ENCODE measurements at regions of chr14 and their contacts with region 1.

Region 1: GRCh38 chr14:20350860-20351259 is 7.4 kb downstream of the PARP2 start:
- DNase-seq: peak in 1 of 2 experiments; percentile 6
- H3K4me3 ChIP-seq: no peak overlapping the region
- H3K4me3 Mint-ChIP-seq: no peak overlapping the region
- H3K27ac Mint-ChIP-seq: no peak overlapping the region
- H3K4me1 ChIP-seq: no peaks in the 10 kb centered on the region
- H3K4me1 Mint-ChIP-seq: no peaks in the 10 kb centered on the region
- H3K27me3 ChIP-seq: no peaks in the 10 kb centered on the region
- H3K27me3 Mint-ChIP-seq: no peaks in the 10 kb centered on the region
- CTCF ChIP-seq: peak; percentile 22 to 27

Region 2: DNA sequence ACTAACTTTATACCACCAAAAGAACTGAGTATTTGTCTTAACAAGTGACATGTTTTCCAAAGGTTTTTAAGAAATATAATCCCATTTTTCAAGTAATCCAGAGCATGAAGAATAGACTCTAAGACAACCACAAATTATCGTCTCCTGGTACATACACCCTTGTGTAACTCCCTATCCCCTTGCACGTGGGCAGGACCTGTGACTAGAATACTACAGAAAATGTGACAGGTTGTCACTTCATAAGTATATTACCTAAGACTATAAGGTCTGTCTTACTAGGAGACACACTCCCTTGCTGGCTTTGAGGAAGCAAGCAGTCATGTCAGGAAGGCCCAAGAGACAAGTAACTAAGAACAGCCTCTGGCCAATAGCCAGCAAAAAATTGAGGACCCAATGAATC is 36.8 kb before region 1 on chr14:
- CTCF ChIA-PET with region 1: no interaction called
- POLR2A ChIA-PET with region 1: no interaction called
- intact Hi-C with region 1: no loop called
- DNase-seq: no peak
- H3K4me3 ChIP-seq: no peak overlapping the region
- H3K4me3 Mint-ChIP-seq: no peak overlapping the region
- H3K27ac Mint-ChIP-seq: no peak overlapping the region
- H3K4me1 ChIP-seq: no peaks in the 10 kb centered on the region
- H3K4me1 Mint-ChIP-seq: no peaks in the 10 kb centered on the region
- H3K27me3 ChIP-seq: no peaks in the 10 kb centered on the region
- H3K27me3 Mint-ChIP-seq: no peaks in the 10 kb centered on the region
- CTCF ChIP-seq: no peak

Region 3: DNA sequence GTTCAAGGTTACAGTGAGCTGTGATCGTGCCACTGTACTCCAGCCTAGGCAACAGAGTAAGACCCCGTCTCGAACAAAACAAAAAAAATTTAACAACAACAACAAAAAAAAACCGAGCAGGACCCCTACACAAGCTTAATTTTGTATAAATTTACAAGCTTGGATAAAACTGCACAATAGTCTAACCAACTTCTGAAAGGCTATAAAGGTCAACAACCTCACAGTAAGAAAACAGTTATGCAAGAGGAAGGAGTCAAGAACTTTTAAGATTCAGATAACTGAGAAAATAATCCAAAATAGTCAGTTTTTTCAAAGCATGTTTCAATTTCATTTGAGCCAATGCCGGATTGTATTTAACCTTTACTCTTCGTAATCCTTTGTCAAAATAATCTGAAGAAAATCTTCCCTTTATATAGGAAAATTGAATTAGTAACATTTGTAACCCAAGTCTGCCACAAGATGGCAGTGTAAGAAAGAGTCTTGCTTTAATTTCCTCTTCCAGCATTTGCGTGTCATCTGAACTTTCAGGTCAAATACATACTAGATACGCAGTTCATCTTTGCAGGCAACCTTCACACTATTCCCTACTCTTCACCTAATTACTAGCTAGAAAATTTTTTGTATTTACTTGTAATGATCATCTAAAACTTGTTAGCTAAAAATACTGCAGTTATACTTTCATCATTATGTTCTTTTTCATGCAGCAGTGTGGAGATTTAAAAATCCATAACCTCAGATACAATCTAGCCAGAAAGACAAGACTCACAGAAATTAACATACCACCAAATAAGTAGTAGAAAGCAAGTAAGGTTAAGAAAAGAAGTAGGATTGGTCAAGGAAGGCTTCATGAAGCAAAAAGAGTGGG is 23.6 kb before region 1 on chr14:
- CTCF ChIA-PET with region 1: no interaction called
- POLR2A ChIA-PET with region 1: no interaction called
- intact Hi-C with region 1: loop called (anchors 1 kb)
- DNase-seq: peak in 1 of 2 experiments; percentile 62
- H3K4me3 ChIP-seq: no peak overlapping the region
- H3K4me3 Mint-ChIP-seq: no peak overlapping the region
- H3K27ac Mint-ChIP-seq: no peak overlapping the region
- H3K4me1 ChIP-seq: peaks cover 10% of the 10 kb centered on the region; the same call in 1 of the 2 replicates
- H3K4me1 Mint-ChIP-seq: peaks cover 22% of the 10 kb centered on the region
- H3K27me3 ChIP-seq: no peaks in the 10 kb centered on the region
- H3K27me3 Mint-ChIP-seq: no peaks in the 10 kb centered on the region
- CTCF ChIP-seq: peak; percentile 39 to 59

Measured in Caco-2 (cell line).